BJ (cell line): ENCODE measurements at regions of chr17 and their contacts with region 1.

Region 1: DNA sequence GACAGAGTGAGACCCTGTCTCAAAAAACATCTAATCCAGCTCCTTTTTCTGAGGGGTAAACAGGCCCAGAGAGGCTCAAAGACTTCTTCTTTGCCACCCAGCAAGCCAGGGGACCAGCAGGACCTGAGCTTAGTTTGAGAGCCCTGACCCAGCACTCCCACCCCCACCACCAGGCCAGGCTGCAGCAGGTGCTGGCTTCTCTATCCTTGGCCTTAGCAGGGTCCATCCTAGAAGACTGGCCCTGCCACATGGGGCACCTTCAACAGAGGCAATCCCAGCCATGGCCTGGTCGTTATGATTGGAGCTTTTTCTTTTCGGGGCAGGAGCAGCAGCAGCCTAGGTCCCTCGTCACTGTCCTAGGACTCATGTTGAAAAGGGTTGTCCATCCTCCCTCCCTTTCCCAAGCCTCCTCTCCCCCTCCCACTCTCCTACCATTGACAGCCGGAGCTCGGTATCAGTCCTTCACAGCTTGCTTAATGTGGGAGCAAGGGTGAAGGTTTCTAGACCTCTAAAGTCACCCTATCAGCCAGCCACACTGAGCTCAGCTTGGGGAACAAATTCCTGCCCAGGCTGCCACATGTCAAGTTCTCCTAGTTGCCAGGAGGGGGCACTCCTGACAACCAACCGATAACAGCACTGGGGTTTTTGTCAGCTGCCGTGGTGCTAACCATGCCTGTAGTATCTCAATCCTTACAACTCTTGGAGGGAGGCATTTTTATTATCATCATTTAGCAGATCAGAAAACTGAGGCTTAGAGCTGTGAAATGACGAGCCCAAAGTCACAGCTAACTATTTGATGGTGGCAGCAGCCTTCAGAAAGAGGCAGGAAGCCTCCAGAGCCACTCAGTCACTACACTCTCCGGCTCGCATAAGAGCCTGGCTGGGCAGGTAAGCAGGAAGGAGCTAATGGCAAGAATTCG is 11.2 kb downstream of the MRPL27 start:
- DNase-seq: no peak
- H3K4me3 ChIP-seq: no peak overlapping the region
- H3K27me3 ChIP-seq: no peaks in the 10 kb centered on the region
- CTCF ChIP-seq: peak; percentile 85

Region 2: DNA sequence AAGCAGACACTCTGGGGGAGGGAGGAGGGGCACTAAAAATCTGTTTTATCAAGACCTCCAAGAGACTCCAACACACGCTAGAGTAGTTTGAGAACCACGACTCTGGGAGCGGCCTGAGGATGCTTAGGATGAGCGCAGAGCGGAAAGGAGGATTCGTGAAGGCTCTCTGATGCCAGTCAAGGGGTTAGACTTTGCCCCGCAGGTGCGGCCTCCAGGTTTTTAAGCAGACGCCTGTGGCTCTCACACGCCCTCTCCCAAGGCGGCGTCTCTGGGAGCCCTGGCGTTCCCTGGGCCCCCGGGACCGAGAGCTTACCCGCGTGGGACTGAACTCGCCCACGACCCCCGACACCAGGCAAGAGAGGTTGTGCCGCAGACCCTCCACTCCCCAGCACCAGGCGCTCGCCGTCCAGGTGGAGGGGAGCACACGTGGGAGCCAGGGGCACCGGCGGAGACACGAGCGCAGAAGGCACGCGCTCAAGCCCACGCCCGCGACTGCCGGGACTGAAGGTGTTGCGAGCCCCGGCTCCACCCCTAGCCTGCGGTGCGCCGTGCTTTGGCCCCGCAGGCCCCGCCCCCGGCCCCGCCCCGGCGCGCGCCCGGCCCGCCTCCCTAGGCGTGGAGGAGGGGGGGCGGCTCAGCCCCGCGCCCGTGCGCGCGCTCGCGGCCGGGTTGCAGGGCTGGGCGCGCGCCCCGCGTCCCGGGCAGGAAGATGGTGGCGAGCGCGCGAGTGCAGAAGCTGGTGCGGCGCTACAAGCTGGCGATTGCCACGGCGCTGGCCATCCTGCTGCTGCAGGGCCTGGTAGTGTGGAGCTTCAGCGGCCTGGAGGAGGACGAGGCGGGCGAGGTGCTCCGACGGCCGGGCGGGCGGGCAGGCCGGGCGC is 16.1 kb before region 1 on chr17 and contains the start of gene XYLT2:
- CTCF ChIA-PET with region 1: interaction called, 24 read pairs
- POLR2A ChIA-PET with region 1: interaction called, 4 read pairs
- DNase-seq: no peak
- H3K4me3 ChIP-seq: peak within 1 kb of the TSS; percentile 92
- H3K27me3 ChIP-seq: no peaks in the 10 kb centered on the region
- CTCF ChIP-seq: no peak
- polyA plus RNA-seq, gene XYLT2: 15.4 and 25.0 TPM in 2 replicates

Region 3: DNA sequence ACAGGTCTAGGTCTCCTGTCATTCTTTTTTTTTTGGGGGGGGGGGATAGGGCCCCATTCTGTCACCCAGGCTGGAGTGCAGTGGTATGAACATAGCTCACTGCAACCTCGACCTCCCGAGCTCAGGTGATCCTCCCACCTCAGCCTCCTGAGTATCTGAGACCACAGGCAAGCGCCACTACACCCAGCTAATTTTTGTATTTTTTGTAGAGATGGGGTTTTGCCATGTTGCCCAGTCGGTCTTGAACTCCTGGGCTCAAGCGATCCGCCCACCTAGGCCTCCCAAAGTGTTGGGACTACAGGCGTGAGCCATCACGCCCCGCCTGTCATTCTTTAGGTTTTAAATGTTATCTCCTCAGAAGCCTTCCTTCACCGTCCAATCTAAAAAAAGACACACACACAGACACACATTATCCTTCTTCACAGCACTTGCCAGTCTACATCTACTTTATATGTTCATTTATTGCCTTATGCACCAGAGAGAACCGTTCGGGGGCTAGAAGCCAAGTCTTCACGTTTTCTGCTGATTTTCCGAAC is 10.5 kb after region 1 on chr17:
- CTCF ChIA-PET with region 1: interaction called, 13 read pairs
- POLR2A ChIA-PET with region 1: no interaction called
- DNase-seq: no peak
- H3K4me3 ChIP-seq: peak overlapping the region; percentile 54
- H3K27me3 ChIP-seq: no peaks in the 10 kb centered on the region
- CTCF ChIP-seq: no peak